ENCODE measurements at regions of chr5 and their contacts with region 1.

Region 1: DNA sequence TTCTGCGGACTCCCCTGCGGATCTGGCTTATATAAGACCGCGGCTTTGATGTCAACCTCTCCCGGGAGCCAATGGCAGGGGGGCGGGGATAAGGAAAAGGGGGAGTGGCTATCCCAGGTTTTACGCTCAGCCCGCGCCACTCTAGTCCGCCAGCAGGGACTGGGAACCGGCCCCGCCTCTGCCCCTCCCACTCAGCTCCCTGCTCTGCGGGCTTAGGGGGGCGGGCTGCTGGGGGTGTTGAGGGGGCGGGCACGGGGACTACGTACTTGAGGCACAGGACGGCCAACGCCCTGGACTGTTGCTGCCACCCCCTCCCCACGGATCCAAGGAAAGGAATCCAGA is at the start of gene HAND1:
- DNase-seq: no peak
- ATAC-seq: peak; percentile 90
- H3K4me3 ChIP-seq: peak within 1 kb of the TSS; percentile 45 to 48
- H3K27ac ChIP-seq: no peak within 1 kb of the TSS
- H3K4me1 ChIP-seq: no peaks in the 10 kb centered on the region; the same call in 1 of the 2 replicates
- H3K27me3 ChIP-seq: peaks cover 17% of the 10 kb centered on the region
- CTCF ChIP-seq: no peak
- total RNA-seq, gene HAND1: 0.10 TPM

Region 2: DNA sequence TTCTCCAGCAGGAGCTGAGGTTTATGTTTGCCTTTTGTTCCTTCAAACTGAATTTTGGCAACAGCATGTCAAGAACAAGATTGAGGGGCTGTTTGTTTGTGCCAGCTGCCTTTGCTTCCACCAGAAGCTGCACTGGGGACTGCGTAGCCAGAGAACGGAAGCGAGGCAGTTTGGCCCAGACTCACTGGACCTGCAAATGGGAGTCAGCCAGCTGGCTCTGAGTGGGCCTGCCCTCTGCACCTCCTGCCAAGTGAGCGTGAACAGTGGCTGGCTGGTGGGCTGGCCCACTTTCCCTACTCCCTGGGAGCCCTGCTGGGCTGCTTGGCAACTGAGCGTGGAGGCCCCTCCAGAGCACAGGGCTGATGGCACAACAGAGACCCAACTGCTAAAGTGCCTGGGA is 176.0 kb before region 1 on chr5:
- CTCF ChIA-PET with region 1: no interaction called
- POLR2A ChIA-PET with region 1: no interaction called
- in situ Hi-C with region 1: no loop called
- intact Hi-C with region 1: no loop called
- DNase-seq: no peak
- ATAC-seq: no peak
- H3K4me3 ChIP-seq: no peak overlapping the region
- H3K27ac ChIP-seq: no peak overlapping the region
- H3K4me1 ChIP-seq: no peaks in the 10 kb centered on the region; the same call in 1 of the 2 replicates
- H3K27me3 ChIP-seq: no peaks in the 10 kb centered on the region
- CTCF ChIP-seq: no peak

Region 3: GRCh38 chr5:154445422-154446182 is 32.6 kb before region 1 on chr5 and contains the start of gene SAP30L:
- CTCF ChIA-PET with region 1: no interaction called
- POLR2A ChIA-PET with region 1: interaction called, 10 read pairs
- in situ Hi-C with region 1: no loop called
- intact Hi-C with region 1: no loop called
- DNase-seq: peak; percentile 62
- ATAC-seq: peak; percentile 98
- H3K4me3 ChIP-seq: peak within 1 kb of the TSS; percentile 94 to 97
- H3K27ac ChIP-seq: peak within 1 kb of the TSS; percentile 84
- H3K4me1 ChIP-seq: peaks cover 8% of the 10 kb centered on the region
- H3K27me3 ChIP-seq: no peaks in the 10 kb centered on the region
- CTCF ChIP-seq: no peak
- total RNA-seq, gene SAP30L: 54.6 TPM

Region 4: GRCh38 chr5:154868702-154869101 is 390.5 kb after region 1 on chr5:
- CTCF ChIA-PET with region 1: no interaction called
- POLR2A ChIA-PET with region 1: interaction called, 11 read pairs
- in situ Hi-C with region 1: no loop called
- intact Hi-C with region 1: no loop called
- DNase-seq: no peak
- ATAC-seq: peak; percentile 84
- H3K4me3 ChIP-seq: no peak overlapping the region
- H3K27ac ChIP-seq: no peak overlapping the region
- H3K4me1 ChIP-seq: peaks cover 4% of the 10 kb centered on the region
- H3K27me3 ChIP-seq: no peaks in the 10 kb centered on the region
- CTCF ChIP-seq: no peak; the same call in 1 of the 2 replicates

Measured in Panc1 (cell line).